K562 (cell line): ENCODE measurements at regions of chr11 and their contacts with region 1.

Region 1: GRCh38 chr11:110098645-110099044 is 5.5 kb downstream of the ZC3H12C start:
- DNase-seq: no peak
- ATAC-seq: peak; percentile 84
- H3K4me3 ChIP-seq: no peak overlapping the region
- H3K27ac ChIP-seq: no peak overlapping the region
- H3K4me1 ChIP-seq: peaks cover 0 to 3% of the 10 kb centered on the region in 2 experiments; a peak in 4 of 5 replicates
- H3K27me3 ChIP-seq: peaks cover 0 to 2% of the 10 kb centered on the region in 2 experiments; a peak in 2 of 5 replicates
- CTCF ChIP-seq: peak in 1 of 3 experiments; percentile 17; a peak in 1 of 6 replicates
- EP300 ChIP-seq: no peak
- POLR2A ChIP-seq: no peak
- RAD21 ChIP-seq: peak; percentile 38 to 65; a peak in 3 of 4 replicates

Region 2: DNA sequence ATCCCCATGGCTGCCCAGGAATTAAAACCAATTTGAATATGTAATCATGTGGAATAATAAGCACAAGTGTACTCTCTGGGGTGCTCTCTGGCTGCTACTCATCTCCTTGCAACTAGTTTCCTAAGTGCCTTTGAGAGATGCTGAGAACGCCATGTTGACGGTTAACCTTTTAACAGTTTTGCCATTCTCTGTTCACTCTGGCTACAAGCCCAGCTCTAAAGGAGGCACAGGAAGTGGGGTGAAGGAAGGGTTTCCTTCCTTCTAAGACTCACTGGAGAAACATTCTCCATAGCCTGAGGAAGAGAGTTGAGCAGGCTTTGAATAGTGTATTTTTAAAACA is 127.5 kb before region 1 on chr11:
- CTCF ChIA-PET with region 1: no interaction called
- POLR2A ChIA-PET with region 1: no interaction called
- in situ Hi-C with region 1: no loop called
- intact Hi-C with region 1: loop called (anchors 5 kb)
- DNase-seq: no peak
- ATAC-seq: no peak
- H3K4me3 ChIP-seq: no peak overlapping the region
- H3K27ac ChIP-seq: no peak overlapping the region
- H3K4me1 ChIP-seq: no peaks in the 10 kb centered on the region; a peak in 1 of 5 replicates
- H3K27me3 ChIP-seq: no peaks in the 10 kb centered on the region
- CTCF ChIP-seq: no peak
- EP300 ChIP-seq: no peak
- POLR2A ChIP-seq: no peak
- RAD21 ChIP-seq: no peak

Region 3: DNA sequence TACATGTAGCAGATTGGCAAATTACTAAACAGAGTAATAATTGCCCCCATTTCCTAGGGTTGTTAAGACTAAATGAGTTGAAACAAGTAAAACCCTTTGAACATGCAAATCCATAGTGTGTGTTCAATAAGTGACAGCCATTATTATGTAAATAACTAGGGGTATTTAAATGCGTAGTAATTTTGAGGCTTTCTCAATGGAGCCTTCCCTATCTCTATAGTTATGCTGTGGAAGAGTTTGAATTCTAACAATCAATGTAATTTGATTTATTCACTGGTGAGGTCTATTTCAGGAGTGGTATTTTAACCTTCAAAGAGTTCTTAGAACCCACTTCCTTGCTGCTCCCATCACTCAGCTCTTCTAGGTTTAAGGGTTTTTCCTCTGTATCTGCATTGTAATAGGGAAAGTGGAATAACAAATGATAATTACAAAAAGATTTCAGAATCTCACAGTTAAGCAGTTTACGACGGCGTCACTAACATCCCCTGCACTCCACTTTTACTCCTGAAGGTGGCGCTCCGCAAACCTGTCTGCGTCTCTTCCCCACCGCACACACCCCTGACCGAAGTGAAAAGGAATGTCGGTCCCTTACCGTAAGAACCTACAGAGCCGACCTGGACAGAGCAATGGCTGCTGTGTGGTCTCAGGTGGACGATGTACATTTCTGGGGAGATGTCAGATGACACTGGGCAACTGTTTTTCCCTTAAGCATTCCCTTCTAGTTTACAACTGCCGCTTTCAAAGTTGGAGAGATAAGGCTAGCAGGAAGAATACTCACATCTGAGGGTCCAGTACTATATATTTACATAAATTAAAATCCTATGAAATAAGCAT is 75.4 kb after region 1 on chr11:
- CTCF ChIA-PET with region 1: no interaction called
- POLR2A ChIA-PET with region 1: no interaction called
- in situ Hi-C with region 1: no loop called
- intact Hi-C with region 1: loop called (anchors 5 kb)
- DNase-seq: peak; percentile 72 to 79 (median 75)
- ATAC-seq: peak; percentile 95
- H3K4me3 ChIP-seq: no peak overlapping the region
- H3K27ac ChIP-seq: no peak overlapping the region
- H3K4me1 ChIP-seq: no peaks in the 10 kb centered on the region; a peak in 1 of 5 replicates
- H3K27me3 ChIP-seq: no peaks in the 10 kb centered on the region
- CTCF ChIP-seq: peak; percentile 81 to 92 (median 81)
- EP300 ChIP-seq: no peak
- POLR2A ChIP-seq: no peak
- RAD21 ChIP-seq: peak; percentile 40 to 57